Activated B cell treated with CpG ODN at 0.5 μM for 24 hours (primary cell): ENCODE measurements at regions of chr17 and their contacts with region 1.

Region 1: GRCh38 chr17:42964161-42964932 is at the start of gene AARSD1:
- DNase-seq: peak; percentile 79
- ATAC-seq: peak; percentile 94
- H3K4me3 Mint-ChIP-seq: peak within 1 kb of the TSS; percentile 97
- H3K27ac Mint-ChIP-seq: peak within 1 kb of the TSS; percentile 87
- H3K4me1 Mint-ChIP-seq: peaks cover 14% of the 10 kb centered on the region
- H3K27me3 Mint-ChIP-seq: no peaks in the 10 kb centered on the region
- CTCF ChIP-seq: no peak
- total RNA-seq, gene AARSD1: 63.6 and 70.4 TPM in 2 replicates

Region 2: GRCh38 chr17:42804918-42805367 is 159.4 kb before region 1 on chr17:
- CTCF ChIA-PET with region 1: no interaction called
- POLR2A ChIA-PET with region 1: no interaction called
- intact Hi-C with region 1: no loop called
- DNase-seq: no peak
- ATAC-seq: no peak
- H3K4me3 Mint-ChIP-seq: no peak overlapping the region
- H3K27ac Mint-ChIP-seq: peak overlapping the region; percentile 14
- H3K4me1 Mint-ChIP-seq: no peaks in the 10 kb centered on the region
- H3K27me3 Mint-ChIP-seq: no peaks in the 10 kb centered on the region
- CTCF ChIP-seq: no peak

Region 3: DNA sequence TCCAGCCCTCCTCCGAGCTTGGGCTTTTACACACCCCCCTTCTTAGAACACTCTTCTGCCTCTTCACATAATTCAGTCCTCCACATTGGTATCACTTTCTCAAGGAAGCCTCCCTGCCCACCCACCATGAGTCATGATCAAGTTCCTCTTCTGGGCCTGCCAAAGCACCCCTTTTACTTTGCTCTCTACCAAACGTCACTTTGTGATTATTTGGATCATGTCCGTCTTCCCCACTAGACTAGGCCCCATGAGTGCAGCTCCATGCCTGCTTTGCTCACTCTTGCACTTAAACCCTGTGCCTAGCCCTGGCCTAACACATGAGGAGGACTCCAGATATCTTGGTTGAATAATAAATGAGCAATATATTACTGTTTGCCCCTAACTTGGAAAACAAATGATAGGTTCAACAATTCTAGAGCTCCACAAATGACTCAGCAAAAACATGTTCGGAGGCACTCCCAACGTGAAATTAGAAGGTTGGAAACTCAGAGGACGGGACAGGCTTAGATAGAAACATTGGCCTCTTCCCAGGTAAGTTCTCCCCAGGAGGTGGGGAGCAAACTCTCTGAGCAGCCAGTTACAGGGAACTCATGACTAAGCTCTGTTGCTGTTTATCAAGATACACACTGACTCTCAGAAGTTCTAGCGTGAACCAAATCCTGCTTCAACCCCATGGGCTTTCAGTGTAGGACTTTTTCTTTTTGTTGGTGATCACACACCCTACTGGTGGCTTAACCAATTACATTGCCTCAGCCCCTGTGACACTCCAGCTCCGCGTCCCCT is 35.4 kb before region 1 on chr17:
- CTCF ChIA-PET with region 1: no interaction called
- POLR2A ChIA-PET with region 1: no interaction called
- intact Hi-C with region 1: no loop called
- DNase-seq: no peak
- ATAC-seq: peak; percentile 89
- H3K4me3 Mint-ChIP-seq: no peak overlapping the region
- H3K27ac Mint-ChIP-seq: peak overlapping the region; percentile 75
- H3K4me1 Mint-ChIP-seq: peaks cover 9% of the 10 kb centered on the region
- H3K27me3 Mint-ChIP-seq: peaks cover 2% of the 10 kb centered on the region
- CTCF ChIP-seq: no peak

Region 4: GRCh38 chr17:42980398-42981397 is 16.4 kb after region 1 on chr17 and contains the start of gene RUNDC1:
- CTCF ChIA-PET with region 1: no interaction called
- POLR2A ChIA-PET with region 1: interaction called, 34 read pairs
- intact Hi-C with region 1: loop called (anchors 1 kb)
- DNase-seq: peak; percentile 94
- ATAC-seq: peak; percentile 76
- H3K4me3 Mint-ChIP-seq: peak within 1 kb of the TSS; percentile 99
- H3K27ac Mint-ChIP-seq: peak within 1 kb of the TSS; percentile 98
- H3K4me1 Mint-ChIP-seq: peaks cover 53% of the 10 kb centered on the region
- H3K27me3 Mint-ChIP-seq: no peaks in the 10 kb centered on the region
- CTCF ChIP-seq: no peak
- total RNA-seq, gene RUNDC1: 28.3 and 30.9 TPM in 2 replicates

Region 5: GRCh38 chr17:43576563-43577229 is 612.3 kb after region 1 on chr17:
- CTCF ChIA-PET with region 1: no interaction called
- POLR2A ChIA-PET with region 1: no interaction called
- intact Hi-C with region 1: no loop called
- DNase-seq: peak; percentile 53
- ATAC-seq: peak; percentile 21
- H3K4me3 Mint-ChIP-seq: no peak overlapping the region
- H3K27ac Mint-ChIP-seq: peak overlapping the region; percentile 46
- H3K4me1 Mint-ChIP-seq: peaks cover 23% of the 10 kb centered on the region
- H3K27me3 Mint-ChIP-seq: peaks cover 4% of the 10 kb centered on the region
- CTCF ChIP-seq: no peak